HepG2 (cell line): ENCODE measurements at regions of chr7 and their contacts with region 1.

Region 1: DNA sequence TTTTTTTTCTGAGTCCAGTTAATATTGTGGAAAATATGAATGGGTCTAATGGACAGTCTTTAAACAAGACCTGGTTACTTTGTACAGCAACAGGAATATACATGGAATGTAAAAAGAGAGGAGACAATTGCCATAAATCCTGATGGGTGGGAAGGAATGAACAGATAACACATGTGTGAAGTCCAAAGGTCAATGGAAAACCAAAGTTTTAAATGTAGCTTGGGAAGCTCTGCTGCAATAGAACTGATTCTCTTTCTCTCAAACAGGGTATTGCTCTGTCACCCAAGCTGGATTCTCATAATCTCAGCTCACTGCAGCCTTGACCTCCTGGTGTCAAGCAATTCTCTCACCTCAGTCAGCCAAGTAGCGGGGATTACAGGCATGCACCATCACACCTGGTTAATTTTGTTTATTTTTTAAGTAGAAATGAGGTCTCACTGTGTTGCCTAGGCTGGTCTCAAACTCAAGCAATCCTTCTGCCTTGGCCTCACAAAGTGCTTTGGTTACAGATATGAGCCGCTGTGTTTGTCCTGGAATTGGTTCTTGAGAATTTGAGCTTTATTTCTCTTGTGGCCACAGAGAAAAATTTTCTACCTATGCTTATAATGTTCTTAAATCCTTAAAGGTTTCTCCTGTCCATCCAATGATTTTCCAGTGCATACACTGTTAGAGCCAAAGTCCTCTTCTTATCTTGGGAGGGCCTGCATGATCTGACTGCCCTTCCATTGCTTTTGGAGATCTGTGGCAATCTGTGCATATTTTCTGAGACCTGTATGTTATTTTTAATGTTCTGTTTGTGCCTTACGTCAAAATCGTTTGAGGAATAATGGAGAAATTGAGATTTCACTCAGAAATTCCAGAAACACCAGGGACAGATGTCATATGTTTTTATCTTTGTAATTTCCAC is 30.7 kb upstream of the ZNF92 start:
- DNase-seq: peak; percentile 85
- ATAC-seq: peak; percentile 85
- H3K4me3 ChIP-seq: no peak overlapping the region; a peak in 1 of 6 replicates
- H3K27ac ChIP-seq: peak overlapping the region; percentile 57
- H3K4me1 ChIP-seq: peaks cover 31% of the 10 kb centered on the region
- H3K27me3 ChIP-seq: no peaks in the 10 kb centered on the region
- CTCF ChIP-seq: no peak
- EP300 ChIP-seq: 0 out of 4 replicates have a peak, but pooled peaks of 1 of the 2 experiments have one; percentile 29
- POLR2A ChIP-seq: no peak
- RAD21 ChIP-seq: no peak

Region 2: GRCh38 chr7:65216459-65216858 is 126.5 kb before region 1 on chr7:
- CTCF ChIA-PET with region 1: no interaction called
- POLR2A ChIA-PET with region 1: no interaction called
- in situ Hi-C with region 1: no loop called
- intact Hi-C with region 1: no loop called
- DNase-seq: peak; percentile 52
- ATAC-seq: peak; percentile 83
- H3K4me3 ChIP-seq: no peak overlapping the region
- H3K27ac ChIP-seq: no peak overlapping the region
- H3K4me1 ChIP-seq: peaks cover 10% of the 10 kb centered on the region; the same call in 1 of the 2 replicates
- H3K27me3 ChIP-seq: no peaks in the 10 kb centered on the region
- CTCF ChIP-seq: peak; percentile 82
- EP300 ChIP-seq: no peak
- POLR2A ChIP-seq: no peak
- RAD21 ChIP-seq: peak; percentile 37; the same call in 1 of the 2 replicates

Region 3: DNA sequence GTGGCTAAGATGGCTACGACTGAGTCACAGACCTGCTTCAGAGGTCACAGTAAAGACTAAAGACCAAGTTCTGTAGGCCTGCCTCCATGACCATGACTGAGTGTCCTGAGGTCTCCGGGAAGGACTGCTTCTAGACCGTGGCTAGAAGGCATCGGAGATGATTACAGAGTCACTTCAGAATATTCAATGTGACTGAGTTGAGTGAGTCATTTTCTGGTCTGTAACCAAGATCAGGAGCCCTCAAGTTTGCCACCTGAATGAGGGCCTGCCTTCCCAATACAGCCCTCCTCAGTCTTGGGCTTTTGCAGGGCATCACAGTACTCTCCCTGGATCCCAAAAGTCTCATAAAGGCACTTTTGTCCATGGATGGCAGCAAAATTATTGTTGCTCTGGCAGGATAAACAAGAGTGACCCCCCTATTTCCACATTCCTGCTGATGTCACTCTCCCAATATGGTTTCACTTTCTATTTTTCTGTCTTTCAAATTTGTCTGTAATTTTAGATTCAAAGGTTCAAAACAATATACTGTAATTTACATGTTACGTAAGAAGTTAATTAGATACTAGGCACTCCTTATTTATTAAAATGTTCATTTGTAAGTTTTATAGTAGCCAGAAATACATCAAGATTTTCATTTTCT is 17.1 kb before region 1 on chr7:
- CTCF ChIA-PET with region 1: no interaction called
- POLR2A ChIA-PET with region 1: no interaction called
- in situ Hi-C with region 1: no loop called
- intact Hi-C with region 1: no loop called
- DNase-seq: no peak
- ATAC-seq: no peak
- H3K4me3 ChIP-seq: no peak overlapping the region
- H3K27ac ChIP-seq: no peak overlapping the region
- H3K4me1 ChIP-seq: no peaks in the 10 kb centered on the region
- H3K27me3 ChIP-seq: no peaks in the 10 kb centered on the region
- CTCF ChIP-seq: no peak
- EP300 ChIP-seq: no peak
- POLR2A ChIP-seq: no peak
- RAD21 ChIP-seq: no peak

Region 4: DNA sequence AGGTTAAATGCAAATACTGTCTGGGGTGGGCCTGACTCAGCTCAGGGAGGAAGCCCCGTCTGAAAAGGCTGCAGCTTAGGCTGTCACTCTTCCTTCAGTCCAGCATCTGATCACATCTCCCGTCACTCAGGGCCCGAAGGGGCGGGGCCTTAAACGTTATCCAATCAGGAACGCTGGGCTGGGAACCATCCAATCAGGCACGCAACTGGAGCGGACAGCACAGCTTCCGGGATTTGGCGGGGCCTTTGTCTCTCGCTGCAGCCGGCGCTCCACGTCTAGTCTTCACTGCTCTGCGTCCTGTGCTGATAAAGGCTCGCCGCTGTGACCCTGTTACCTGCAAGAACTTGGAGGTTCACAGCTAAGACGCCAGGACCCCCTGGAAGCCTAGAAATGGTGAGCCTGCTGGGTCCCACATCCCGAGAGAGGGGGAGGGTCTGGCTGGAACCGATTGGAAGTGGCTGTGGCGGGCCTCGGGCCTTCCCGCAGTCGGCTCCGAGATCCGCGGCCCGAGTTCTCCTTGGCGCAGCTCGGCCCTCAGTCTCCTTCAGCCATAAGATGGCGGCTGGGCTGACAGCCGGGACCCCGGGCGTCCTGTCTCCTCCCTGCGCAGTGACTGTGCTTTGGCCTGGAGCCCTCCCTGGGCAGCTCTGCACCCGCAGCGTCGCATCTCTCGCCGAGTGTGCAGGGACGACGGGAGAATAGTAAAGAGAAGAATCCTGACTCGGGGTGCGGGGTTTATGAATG is 30.8 kb after region 1 on chr7 and contains the start of gene ZNF92:
- CTCF ChIA-PET with region 1: no interaction called
- POLR2A ChIA-PET with region 1: interaction called, 12 read pairs
- in situ Hi-C with region 1: no loop called
- intact Hi-C with region 1: no loop called
- DNase-seq: peak; percentile 97
- ATAC-seq: peak; percentile 98
- H3K4me3 ChIP-seq: peak within 1 kb of the TSS; percentile 80 to 97 (median 91)
- H3K27ac ChIP-seq: peak within 1 kb of the TSS; percentile 75
- H3K4me1 ChIP-seq: peaks cover 65% of the 10 kb centered on the region
- H3K27me3 ChIP-seq: no peaks in the 10 kb centered on the region
- CTCF ChIP-seq: 0 out of 2 replicates have a peak, but pooled peaks have one; percentile 3
- EP300 ChIP-seq: no peak
- POLR2A ChIP-seq: peak; percentile 94 to 97
- RAD21 ChIP-seq: peak; percentile 38
- total RNA-seq, gene ZNF92: 13.2 and 19.0 TPM in 2 replicates